ENCODE measurements at regions of chr3 and their contacts with region 1.

Region 1: GRCh38 chr3:194265483-194265892 is 85.6 kb downstream of the CPN2 start:
- DNase-seq: peak; percentile 94
- ATAC-seq: peak; percentile 82

Region 2: GRCh38 chr3:194003125-194004057 is 262.1 kb before region 1 on chr3:
- intact Hi-C with region 1: loop called in 1 of 2 experiments (anchors 5 kb)
- DNase-seq: peak; percentile 93
- ATAC-seq: peak; percentile 91 to 94

Region 3: GRCh38 chr3:194070634-194071409 is 194.7 kb before region 1 on chr3:
- intact Hi-C with region 1: loop called in 1 of 2 experiments (anchors 2 kb)
- DNase-seq: peak; percentile 91
- ATAC-seq: peak; percentile 91 to 92

Region 4: DNA sequence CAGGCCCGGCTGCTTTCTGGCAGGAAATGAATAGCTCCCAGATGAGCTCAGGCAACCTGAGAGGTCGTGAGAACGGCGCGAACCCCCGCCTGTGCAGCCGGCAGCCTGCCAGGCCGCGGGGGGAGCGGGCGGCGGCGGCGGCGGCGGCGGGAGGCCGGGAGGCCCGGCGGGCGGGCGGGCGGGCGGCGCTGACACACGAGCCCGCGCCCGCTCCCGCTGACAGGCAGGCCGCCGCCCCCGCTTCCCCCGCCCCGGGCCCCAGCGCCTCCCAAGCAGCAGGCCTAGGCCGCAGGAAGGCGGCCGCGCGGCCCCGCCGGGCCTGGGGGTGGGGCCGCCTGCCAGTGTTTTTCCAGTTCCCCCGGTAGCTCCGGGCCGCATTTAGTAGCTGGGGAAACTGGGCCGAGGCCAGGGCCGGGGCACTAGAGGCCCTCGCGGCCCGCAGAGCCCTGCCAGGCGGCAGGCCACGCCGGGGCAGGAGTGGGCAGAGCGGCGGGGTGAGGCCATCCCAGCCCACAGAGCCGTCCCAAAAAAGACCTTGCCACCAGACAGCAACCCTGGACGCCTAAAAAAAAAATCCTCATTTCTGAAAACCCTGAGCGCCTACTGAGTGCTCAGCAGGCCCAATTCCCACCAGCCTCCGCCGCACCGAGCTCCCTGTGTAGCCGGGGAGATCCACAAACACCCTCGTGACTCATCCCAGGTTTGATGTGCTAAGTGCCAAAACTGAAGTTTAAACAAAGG is 123.9 kb before region 1 on chr3:
- intact Hi-C with region 1: loop called (anchors 2 to 5 kb)
- DNase-seq: peak; percentile 94
- ATAC-seq: peak; percentile 75 to 80

Region 5: GRCh38 chr3:194306109-194306686 is 40.7 kb after region 1 on chr3:
- intact Hi-C with region 1: loop called in 1 of 2 experiments (anchors 5 kb)
- DNase-seq: no peak
- ATAC-seq: no peak